Left cardiac atrium (tissue), 4 donors: ENCODE measurements at regions of chr14 and their contacts with region 1.

Region 1: DNA sequence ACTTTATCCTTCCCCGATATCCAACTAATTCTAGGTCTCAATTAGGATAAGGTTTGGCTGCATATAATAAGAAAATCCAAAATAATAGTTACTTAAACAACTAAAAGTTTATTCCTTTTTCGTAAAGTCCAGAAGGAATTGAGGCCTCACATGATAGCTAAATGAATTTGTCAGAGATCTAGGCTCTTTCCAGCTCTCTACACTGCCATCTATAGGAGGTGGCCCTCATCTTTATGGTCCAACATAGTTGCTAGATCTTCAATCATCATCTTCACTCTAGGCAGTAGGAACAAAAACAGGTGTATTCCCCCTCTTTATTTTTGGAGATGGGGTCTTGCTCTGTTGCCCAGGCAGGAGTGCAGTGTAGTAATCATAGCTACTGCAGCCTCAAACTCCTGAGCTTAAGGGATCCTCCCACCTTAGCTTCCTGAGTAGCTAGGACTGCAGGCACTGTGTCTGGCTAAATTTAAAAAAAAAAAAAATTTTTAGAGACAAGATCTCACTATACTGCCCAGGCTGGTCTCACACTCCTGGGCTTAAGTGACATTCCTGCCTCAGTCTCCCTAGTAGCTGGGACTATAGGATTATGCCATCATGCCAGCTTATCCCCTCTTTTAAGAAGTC is 46.5 kb upstream of the SAV1 start:
- DNase-seq: no peak
- ATAC-seq: peak; percentile 60 to 61

Region 2: DNA sequence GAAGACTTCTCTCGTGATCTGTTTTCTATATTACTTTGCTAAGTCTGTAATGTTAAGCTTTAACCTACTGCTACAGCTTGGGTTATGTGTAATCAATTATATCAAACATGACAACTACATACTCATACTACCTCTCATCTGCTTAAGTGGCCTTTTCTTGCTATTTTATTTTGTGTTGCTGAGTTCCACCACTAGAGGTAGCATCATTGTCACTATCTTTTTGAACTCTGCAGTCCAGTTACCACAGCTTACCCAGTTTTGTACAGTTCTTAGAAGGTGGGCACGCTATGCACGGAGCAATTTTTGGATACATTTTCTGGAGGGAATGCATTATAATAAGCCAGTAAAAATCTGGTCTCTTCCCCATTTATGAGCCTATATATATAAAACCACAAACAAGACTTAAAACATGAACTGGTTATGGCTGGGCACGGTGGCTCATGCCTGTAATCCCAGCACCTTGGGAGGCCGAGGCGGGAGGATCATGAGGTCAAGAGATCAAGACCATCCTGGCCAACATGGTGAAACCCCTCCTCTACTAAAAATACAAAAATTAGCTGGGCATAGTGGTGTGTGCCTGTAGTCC is 94.9 kb before region 1 on chr14:
- intact Hi-C with region 1: loop called in 1 of 2 experiments (anchors 5 kb)
- DNase-seq: no peak
- ATAC-seq: no peak

Region 3: DNA sequence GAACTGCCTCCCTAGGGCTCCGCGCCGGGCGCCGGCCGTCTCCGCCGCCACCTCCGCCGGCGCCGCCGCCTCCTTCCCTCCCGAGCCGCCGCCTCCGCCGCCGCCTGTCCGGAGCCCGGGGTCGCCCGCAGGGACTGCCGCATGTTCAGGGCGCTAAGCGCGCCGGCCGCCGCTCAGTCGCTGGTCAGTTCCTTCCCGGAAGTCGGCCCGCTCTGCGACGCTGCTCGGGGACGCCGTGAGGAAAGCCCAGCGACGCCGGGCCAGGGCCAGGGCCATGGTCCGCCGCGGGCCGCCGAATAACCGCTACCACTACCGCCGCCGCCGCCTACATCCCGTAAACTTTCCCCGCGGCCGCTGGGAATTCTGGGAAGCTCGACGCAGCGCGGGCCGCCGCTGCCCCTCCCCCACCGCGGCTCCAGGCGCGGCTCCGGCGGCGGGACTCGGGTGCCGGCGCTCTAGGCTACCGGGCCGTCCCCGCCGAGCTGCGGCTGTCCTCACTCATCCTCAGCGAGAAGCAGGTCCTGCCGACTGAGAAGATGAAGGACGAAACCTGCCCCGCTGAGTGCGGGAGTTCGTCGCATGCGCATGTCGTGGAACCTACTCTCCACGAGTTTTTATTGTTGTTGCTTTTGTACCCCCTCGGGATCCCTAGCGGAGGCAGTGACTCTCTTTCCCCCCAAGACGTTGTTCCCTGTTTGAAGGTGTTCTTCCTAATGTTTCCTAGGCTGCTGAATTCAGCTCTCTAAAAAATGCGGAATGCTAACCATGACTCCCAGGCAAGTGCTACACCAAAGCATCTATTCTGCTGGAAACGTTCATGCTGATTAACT is 46.4 kb before region 1 on chr14 and contains the start of gene SAV1:
- intact Hi-C with region 1: no loop called
- DNase-seq: peak; percentile 89
- ATAC-seq: peak; percentile 95 to 97
- total RNA-seq, gene SAV1: 23.4 to 27.0 TPM